Activated T-helper 2 cell treated with anti-CD3 and anti-CD28 coated beads, Interferon-gamma antibody, Interleukin-2, Interleukin-4, amounts not matched to agents 10 μg/mL and 5 μg/mL and 100 μg/mL, durations not matched to agents 14 hours and 24 hours and 36 hours (primary cell): ENCODE measurements at regions of chr11 and their contacts with region 1.

Region 1: DNA sequence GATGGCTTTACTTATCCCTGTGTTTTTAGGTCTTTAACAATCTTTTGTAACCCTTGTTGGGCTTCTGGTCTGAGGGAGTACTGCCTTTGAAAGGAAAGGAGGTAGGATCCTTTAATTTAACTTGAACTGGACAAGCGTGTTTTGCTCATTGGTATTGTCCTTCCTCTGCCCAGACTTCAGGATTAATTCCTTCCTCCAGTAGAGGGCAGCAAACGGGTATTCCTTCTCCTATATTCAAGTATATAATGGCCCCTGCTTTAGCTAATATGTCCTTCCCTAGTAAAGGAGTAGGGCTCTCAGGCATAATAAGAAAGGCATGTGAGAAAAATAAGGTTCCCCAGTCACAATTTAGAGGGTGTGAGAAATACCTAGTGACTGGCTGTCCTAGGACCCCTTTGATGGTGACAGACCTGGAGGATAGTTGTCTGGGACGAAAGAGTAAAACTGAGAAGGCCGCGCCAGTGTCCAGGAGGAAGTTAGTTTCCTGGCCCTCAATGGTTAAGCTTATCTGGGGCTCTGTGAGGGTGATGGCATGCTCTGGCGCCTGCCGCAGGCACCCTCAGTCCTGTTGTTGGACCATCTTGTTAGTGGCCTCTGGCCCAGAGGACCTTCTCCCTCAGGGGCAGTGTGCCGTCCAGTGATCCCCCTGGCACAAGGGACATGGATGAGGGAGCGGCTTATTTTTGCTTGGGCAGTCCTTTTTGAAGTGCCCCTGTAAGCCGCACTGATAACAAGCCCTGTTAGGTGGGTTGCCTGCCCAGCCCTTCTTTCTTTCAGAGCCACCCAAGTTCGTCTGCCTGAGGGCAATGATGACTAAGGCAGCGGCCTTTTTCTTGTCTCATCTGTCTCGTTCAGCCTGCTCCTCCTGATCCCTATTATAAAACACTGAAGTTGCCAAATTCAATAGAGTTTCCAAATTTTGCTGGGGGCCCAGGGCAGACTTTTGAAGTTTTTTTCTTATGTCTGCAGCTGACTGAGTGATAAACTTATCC is 51.8 kb downstream of the C11orf71 start:
- DNase-seq: no peak
- H3K4me3 Mint-ChIP-seq: no peak overlapping the region
- H3K27ac Mint-ChIP-seq: no peak overlapping the region
- H3K4me1 Mint-ChIP-seq: peaks cover 4% of the 10 kb centered on the region
- H3K27me3 Mint-ChIP-seq: no peaks in the 10 kb centered on the region

Region 2: DNA sequence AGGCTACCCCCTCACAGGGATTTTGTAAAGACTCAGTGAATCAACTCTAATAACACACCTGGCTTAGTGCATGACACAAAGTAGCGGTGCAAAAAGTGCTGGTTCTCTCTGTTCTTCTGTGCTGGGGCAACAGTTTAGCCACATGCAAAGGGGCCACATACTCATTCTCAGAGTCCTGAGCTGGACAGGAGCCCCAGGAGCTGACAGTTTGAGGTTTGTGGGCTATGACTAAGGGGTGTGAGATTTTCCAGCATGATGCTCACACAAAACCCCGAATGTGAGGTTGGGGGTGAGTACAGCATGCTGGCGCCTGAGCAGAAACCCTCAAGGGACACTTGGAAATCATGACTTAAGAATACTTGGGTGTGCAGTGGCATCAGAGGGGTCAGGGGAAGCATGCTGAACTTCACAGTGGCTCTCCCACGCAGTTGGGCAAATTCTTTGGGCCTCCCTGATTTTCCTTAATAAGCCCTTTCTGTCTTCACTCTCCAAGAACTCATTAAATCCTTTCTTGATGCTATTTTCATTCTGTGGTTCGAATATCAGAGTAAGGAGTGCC is 673.4 kb before region 1 on chr11:
- intact Hi-C with region 1: no loop called
- DNase-seq: no peak
- H3K4me3 Mint-ChIP-seq: no peak overlapping the region
- H3K27ac Mint-ChIP-seq: no peak overlapping the region
- H3K4me1 Mint-ChIP-seq: peaks cover 30% of the 10 kb centered on the region
- H3K27me3 Mint-ChIP-seq: no peaks in the 10 kb centered on the region

Region 3: DNA sequence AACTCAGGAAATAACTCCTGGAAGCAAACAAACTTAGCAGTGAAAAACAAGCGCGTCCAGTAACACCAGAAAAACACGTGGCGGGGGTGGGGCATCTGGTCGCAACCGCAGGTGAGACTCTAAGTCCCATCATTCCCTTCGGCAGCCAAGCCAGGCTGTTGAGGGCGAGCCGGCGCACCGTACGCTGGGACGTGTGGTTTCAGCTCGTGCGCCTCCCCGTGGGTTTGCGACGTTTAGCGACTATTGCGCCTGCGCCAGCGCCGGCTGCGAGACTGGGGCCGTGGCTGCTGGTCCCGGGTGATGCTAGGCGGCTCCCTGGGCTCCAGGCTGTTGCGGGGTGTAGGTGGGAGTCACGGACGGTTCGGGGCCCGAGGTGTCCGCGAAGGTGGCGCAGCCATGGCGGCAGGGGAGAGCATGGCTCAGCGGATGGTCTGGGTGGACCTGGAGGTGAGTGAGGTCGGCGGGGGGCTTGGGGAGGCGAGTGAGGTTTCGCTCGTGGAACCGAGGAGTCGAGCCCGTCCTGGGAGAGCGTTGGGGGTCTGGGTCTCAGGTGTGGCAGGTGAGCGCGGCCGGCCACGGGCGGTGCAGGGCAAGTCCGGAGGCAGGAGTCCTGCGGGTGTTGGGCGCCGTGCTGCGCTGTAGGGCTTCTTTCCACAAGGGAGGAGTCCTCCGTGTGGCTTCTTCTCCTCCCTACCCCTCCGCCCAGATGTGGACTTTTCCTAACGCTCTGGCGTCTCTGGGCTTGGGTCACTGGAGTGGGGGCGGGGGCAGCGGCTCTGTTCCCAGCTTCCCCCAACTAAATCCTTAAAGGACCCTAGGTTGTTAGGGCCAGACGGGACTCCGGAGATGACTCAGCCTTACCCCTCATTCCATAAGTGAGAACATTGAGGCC is 91.0 kb after region 1 on chr11 and contains the start of gene REXO2:
- intact Hi-C with region 1: loop called (anchors 5 kb)
- DNase-seq: peak; percentile 91
- H3K4me3 Mint-ChIP-seq: peak within 1 kb of the TSS; percentile 92
- H3K27ac Mint-ChIP-seq: peak within 1 kb of the TSS; percentile 90
- H3K4me1 Mint-ChIP-seq: peaks cover 24% of the 10 kb centered on the region
- H3K27me3 Mint-ChIP-seq: no peaks in the 10 kb centered on the region
- total RNA-seq, gene REXO2: 94.0 and 98.9 TPM in 2 replicates